HEK293 (cell line): ENCODE measurements at regions of chr9 and their contacts with region 1.

Region 1: GRCh38 chr9:114681594-114682332 is at the start of gene TEX48:
- H3K4me3 ChIP-seq: no peak within 1 kb of the TSS
- H3K27ac ChIP-seq: no peak within 1 kb of the TSS
- H3K4me1 ChIP-seq: peaks cover 3% of the 10 kb centered on the region
- CTCF ChIP-seq: no peak; the same call in 1 of the 2 replicates

Region 2: GRCh38 chr9:114662081-114662989 is 19.4 kb before region 1 on chr9:
- CTCF ChIA-PET with region 1: interaction called, 76 read pairs
- POLR2A ChIA-PET with region 1: no interaction called
- H3K4me3 ChIP-seq: no peak overlapping the region
- H3K27ac ChIP-seq: no peak overlapping the region
- H3K4me1 ChIP-seq: no peaks in the 10 kb centered on the region
- CTCF ChIP-seq: 0 out of 2 replicates have a peak, but pooled peaks have one; percentile 23

Region 3: GRCh38 chr9:114721491-114722079 is 39.8 kb after region 1 on chr9:
- CTCF ChIA-PET with region 1: interaction called, 22 read pairs
- POLR2A ChIA-PET with region 1: no interaction called
- H3K4me3 ChIP-seq: no peak overlapping the region
- H3K27ac ChIP-seq: no peak overlapping the region
- H3K4me1 ChIP-seq: 0 out of 2 replicates have a peak, but pooled peaks cover 2% of the 10 kb centered on the region
- CTCF ChIP-seq: no peak

Region 4: DNA sequence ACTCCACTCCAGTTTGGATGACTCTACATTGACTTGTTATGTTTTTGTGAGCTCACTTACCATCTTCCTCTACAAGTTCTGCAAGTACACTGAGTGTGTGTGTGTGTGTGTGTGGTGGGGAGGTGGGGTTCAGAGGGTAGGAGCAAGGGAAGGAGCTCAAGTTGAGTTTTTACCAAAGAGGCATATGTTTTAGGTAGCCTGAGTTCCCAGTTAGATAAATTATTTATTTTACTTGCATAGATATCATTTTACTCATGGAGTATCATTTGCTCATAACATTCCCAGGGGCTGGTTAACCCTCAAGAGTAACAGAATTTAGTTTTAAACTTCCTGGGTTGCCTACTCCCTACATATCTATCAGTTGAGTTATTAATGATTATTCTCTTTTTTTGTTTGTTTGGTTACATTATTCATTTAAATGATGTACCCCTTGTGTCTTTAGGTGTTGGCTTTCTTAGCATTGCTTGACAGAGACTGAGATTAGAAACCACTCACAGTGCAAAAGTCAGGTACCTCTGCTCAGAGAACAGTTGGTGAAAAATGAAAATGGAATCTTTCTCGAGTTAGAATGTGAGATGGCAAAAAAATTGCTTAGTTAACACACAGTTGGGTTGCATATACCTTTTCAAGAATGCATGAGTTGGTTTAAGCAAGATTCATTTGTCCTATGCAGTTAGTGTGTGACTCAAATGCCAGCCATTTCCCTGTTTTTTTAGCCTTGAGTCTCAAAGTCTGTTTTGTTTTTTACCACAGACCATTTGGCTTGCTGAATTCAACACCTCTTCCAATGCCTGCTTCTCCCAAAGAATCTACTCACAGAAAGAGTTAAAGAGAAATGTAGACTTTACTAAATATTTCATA is 219.4 kb after region 1 on chr9:
- CTCF ChIA-PET with region 1: interaction called, 296 read pairs
- POLR2A ChIA-PET with region 1: interaction called, 4 read pairs
- H3K4me3 ChIP-seq: no peak overlapping the region
- H3K27ac ChIP-seq: no peak overlapping the region
- H3K4me1 ChIP-seq: no peaks in the 10 kb centered on the region
- CTCF ChIP-seq: no peak

Region 5: DNA sequence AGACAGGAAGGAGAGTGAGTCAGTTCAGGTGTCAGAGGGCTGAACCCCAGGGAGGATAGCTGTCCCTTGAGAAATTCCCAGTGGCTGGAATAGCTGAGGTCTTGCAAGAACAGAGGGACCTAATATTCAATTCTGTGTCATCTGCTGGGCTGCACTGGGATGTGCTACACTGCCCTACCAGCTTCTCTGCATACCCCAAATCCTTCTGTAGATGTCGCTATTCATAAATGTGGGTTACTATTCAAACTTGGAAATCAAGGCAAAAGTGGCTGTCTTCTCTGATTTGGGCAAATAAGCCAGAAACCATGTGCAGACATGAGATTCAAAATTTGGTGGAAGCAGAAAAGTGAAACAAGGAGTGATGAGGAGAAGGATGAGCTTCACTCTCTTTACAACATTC is 232.4 kb after region 1 on chr9:
- CTCF ChIA-PET with region 1: interaction called, 296 read pairs
- POLR2A ChIA-PET with region 1: interaction called, 4 read pairs
- H3K4me3 ChIP-seq: no peak overlapping the region
- H3K27ac ChIP-seq: no peak overlapping the region
- H3K4me1 ChIP-seq: no peaks in the 10 kb centered on the region
- CTCF ChIP-seq: no peak

Region 6: DNA sequence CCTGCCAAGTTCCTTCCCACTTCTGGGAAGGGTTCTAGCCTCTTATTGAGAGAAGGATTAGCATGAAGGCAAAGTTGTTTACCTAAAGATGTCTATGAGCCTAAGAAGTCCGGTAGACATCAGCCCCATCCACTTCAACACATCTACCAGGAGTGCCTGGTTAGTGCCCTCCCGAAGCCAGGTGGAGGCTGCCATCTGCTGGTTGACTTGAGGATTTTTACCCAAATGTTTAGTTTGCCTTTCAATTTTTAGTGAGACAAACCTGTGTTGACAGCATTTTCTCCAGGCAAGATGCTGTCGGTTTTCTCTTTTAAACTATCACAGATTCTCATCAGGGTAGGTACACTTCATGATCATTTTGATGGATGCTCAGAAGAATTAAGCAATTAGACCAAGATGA is 332.2 kb after region 1 on chr9:
- CTCF ChIA-PET with region 1: interaction called, 50 read pairs
- POLR2A ChIA-PET with region 1: no interaction called
- H3K4me3 ChIP-seq: no peak overlapping the region
- H3K27ac ChIP-seq: no peak overlapping the region
- H3K4me1 ChIP-seq: peaks cover 3% of the 10 kb centered on the region; the same call in 1 of the 2 replicates
- CTCF ChIP-seq: peak; percentile 61